ENCODE measurements at regions of chr6 and their contacts with region 1.

Region 1: GRCh38 chr6:137641474-137642077 is 147.4 kb upstream of the OLIG3 start:
- DNase-seq: peak; percentile 83 to 88
- H3K4me3 ChIP-seq: no peak overlapping the region
- H3K4me1 ChIP-seq: no peaks in the 10 kb centered on the region
- H3K27me3 ChIP-seq: no peaks in the 10 kb centered on the region

Region 2: GRCh38 chr6:136846046-136846445 is 795.5 kb before region 1 on chr6:
- in situ Hi-C with region 1: loop called (anchors 25 kb)
- DNase-seq: peak; percentile 34 to 65
- H3K4me3 ChIP-seq: no peak overlapping the region
- H3K4me1 ChIP-seq: no peaks in the 10 kb centered on the region
- H3K27me3 ChIP-seq: no peaks in the 10 kb centered on the region

Region 3: DNA sequence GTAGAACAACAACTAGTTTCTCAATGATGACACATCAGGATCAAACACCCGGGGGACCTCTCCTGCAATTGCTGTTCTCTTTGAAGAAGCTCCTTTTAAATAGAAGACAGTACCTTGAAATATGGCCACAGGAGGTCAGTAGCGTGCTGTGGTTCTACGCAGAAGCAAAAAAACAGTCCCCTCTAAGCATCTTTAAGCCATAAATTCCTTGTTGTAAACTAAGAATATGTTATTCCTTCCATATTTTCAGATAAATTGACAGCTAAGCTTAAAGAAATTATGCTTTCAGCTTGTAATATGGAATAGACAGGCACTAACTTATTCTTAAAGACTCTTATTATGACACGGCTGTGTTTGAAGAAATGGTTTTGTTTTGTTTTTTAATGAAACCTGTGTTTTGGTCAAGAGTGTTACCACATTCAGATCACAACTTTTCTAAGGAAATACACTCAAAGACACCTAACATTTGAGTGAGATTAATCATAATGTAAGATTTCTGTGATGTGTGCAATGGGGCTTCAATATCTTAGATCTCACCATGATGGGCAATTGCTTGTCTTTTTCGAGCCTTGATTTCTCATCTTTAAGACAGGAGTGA is 547.1 kb before region 1 on chr6:
- in situ Hi-C with region 1: loop called (anchors 10 kb)
- DNase-seq: peak; percentile 74 to 84
- H3K4me3 ChIP-seq: no peak overlapping the region
- H3K4me1 ChIP-seq: peaks cover 11% of the 10 kb centered on the region
- H3K27me3 ChIP-seq: no peaks in the 10 kb centered on the region

Region 4: GRCh38 chr6:137518386-137518983 is 123.1 kb before region 1 on chr6:
- in situ Hi-C with region 1: no loop called
- DNase-seq: no peak
- H3K4me3 ChIP-seq: no peak overlapping the region
- H3K4me1 ChIP-seq: peaks cover 31% of the 10 kb centered on the region
- H3K27me3 ChIP-seq: peaks cover 3% of the 10 kb centered on the region; the same call in 1 of the 2 replicates